MCF 10A (cell line): ENCODE measurements at regions of chr3 and their contacts with region 1.

Region 1: GRCh38 chr3:150603153-150603979 is at the start of gene SELENOT:
- DNase-seq: peak; percentile 97
- H3K4me3 Mint-ChIP-seq: peak within 1 kb of the TSS; percentile 92
- H3K27ac Mint-ChIP-seq: peak within 1 kb of the TSS; percentile 93
- H3K4me1 Mint-ChIP-seq: peaks cover 39% of the 10 kb centered on the region
- H3K27me3 Mint-ChIP-seq: no peaks in the 10 kb centered on the region
- CTCF ChIP-seq: peak; percentile 13
- total RNA-seq, gene SELENOT: 71.1 and 80.7 TPM in 2 replicates

Region 2: GRCh38 chr3:150588027-150588830 is 15.1 kb before region 1 on chr3:
- CTCF ChIA-PET with region 1: interaction called, 8 read pairs
- POLR2A ChIA-PET with region 1: interaction called, 23 read pairs
- intact Hi-C with region 1: no loop called
- DNase-seq: no peak
- H3K4me3 Mint-ChIP-seq: no peak overlapping the region
- H3K27ac Mint-ChIP-seq: no peak overlapping the region
- H3K4me1 Mint-ChIP-seq: peaks cover 11% of the 10 kb centered on the region
- H3K27me3 Mint-ChIP-seq: no peaks in the 10 kb centered on the region
- CTCF ChIP-seq: no peak

Region 3: DNA sequence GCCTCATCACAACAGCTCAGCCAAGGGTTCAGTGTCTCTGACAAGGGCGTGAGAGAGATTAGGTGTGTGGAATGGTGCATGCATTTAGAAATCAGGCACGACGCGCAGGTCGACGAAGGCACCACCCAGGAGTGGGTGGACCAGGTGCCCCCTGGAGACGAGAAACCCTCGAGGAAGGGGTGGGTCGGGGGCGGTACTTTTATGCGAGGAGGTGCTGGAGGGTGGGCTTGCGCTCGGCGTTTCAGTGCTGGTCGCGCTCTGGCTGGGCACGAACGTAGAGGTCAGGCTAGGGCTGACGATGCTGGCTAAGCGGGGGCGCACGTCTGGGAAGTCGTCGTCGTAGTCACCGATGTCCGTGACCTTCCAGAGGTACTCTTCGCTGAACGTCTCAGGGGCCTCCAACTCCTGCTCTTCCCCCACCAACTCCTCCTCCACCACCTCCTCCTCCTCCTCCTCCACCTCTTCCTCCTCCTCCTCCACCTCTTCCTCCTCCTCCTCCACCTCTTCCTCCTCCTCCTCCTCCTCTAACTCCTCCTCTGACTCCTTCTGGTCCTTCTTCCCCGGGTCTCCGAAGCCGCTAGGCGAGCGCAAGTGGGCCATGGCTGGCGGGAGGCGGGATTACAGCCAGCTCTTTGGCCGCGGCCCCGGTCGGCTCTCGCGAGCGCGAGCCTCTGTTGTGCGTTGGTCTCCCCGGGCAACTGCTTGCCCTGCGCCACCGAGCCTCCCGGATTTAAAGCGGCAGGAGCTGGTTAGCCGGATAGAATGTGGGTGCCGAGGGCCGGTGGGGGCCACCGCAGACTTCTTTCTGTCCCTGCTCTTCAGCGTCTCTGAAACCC is 100.2 kb after region 1 on chr3 and contains the start of gene ERICH6:
- CTCF ChIA-PET with region 1: interaction called, 4 read pairs
- POLR2A ChIA-PET with region 1: interaction called, 10 read pairs
- intact Hi-C with region 1: loop called (anchors 1 kb)
- DNase-seq: peak; percentile 86
- H3K4me3 Mint-ChIP-seq: peak within 1 kb of the TSS; percentile 79
- H3K27ac Mint-ChIP-seq: peak within 1 kb of the TSS; percentile 90
- H3K4me1 Mint-ChIP-seq: peaks cover 10% of the 10 kb centered on the region
- H3K27me3 Mint-ChIP-seq: no peaks in the 10 kb centered on the region
- CTCF ChIP-seq: no peak
- total RNA-seq, gene ERICH6: not detected in 2 replicates

Region 4: DNA sequence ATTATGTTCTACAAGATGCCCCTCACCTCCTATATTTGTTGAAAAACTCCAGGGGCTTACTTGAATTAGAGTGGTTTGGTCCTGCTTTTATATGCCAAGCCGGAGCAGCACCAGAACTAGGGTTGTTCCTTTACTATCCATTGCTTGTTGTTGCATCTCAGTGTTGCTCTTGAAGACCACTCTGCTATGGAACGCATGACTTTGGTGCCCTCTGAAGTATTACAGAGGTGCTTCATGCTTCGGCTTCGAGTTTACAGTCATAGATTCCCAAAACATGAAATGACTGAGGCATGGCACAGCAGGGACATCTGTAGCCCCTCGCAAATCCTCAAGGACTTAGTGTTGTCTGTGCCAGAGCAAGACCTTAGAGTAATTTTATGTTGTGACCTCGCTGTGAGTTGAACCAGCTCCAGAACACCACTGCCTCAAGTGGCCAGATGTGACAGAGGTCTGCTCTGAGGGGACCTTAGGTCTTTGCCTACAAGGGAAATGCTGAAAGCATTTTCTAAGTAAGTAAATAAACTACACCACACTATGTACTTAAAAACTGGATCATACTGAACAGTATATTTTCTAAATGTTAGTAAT is 226.8 kb after region 1 on chr3:
- CTCF ChIA-PET with region 1: no interaction called
- POLR2A ChIA-PET with region 1: no interaction called
- intact Hi-C with region 1: no loop called
- DNase-seq: peak; percentile 5
- H3K4me3 Mint-ChIP-seq: no peak overlapping the region
- H3K27ac Mint-ChIP-seq: no peak overlapping the region
- H3K4me1 Mint-ChIP-seq: no peaks in the 10 kb centered on the region
- H3K27me3 Mint-ChIP-seq: no peaks in the 10 kb centered on the region
- CTCF ChIP-seq: no peak